HCT116 (cell line): ENCODE measurements at regions of chr19 and their contacts with region 1.

Region 1: GRCh38 chr19:50476224-50476942 is at the starts of genes EMC10 and GARIN5A:
- DNase-seq: peak; percentile 96
- ATAC-seq: peak; percentile 90
- H3K4me3 ChIP-seq: peak within 1 kb of the TSS; percentile 92 to 100
- H3K27ac ChIP-seq: peak within 1 kb of the TSS; percentile 93
- H3K4me1 ChIP-seq: peaks cover 9 to 21% of the 10 kb centered on the region in 2 experiments; a peak in 3 of 4 replicates
- H3K27me3 ChIP-seq: no peaks in the 10 kb centered on the region
- CTCF ChIP-seq: no peak
- POLR2A ChIP-seq: peak; percentile 92
- RAD21 ChIP-seq: no peak
- total RNA-seq, gene EMC10: 92.4 TPM
- total RNA-seq, gene GARIN5A: 12.2 TPM

Region 2: DNA sequence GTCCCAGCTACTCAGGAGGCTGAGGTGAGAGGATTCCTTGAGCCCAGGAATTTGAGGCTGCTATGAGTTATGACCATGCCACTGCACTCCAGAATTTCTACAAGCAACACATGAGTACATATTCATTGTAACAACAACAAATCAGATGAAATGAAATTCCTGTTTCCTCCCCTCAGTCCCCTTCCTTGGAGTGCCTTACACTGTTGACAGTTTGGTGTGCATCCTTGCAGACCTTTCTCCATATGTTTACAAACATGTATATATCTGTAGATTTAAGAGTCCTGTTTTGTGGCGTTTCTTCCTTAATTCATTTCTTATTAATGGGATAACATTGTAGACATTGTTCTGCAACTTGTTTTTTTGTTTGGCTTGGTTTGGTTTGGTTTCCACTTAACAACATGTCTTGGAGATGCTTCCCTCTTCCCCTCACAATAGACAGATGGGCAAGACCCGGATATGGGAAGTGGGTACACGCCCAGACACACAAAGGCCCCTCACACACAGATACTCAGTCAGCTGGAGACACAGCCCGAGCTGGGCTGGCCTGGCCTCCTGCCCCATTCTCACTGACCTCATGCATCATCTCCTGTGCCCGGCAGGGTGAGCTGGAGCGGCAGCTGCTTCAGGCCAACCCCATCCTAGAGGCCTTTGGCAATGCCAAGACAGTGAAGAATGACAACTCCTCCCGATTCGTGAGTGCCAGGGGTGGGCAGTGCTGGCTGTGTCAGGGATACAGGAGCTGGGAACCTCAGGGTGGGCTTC is 251.2 kb before region 1 on chr19:
- CTCF ChIA-PET with region 1: no interaction called
- POLR2A ChIA-PET with region 1: no interaction called
- RAD21 ChIA-PET with region 1: no interaction called
- intact Hi-C with region 1: no loop called
- DNase-seq: no peak
- ATAC-seq: no peak
- H3K4me3 ChIP-seq: no peak overlapping the region
- H3K27ac ChIP-seq: no peak overlapping the region
- H3K4me1 ChIP-seq: no peaks in the 10 kb centered on the region
- H3K27me3 ChIP-seq: no peaks in the 10 kb centered on the region
- CTCF ChIP-seq: no peak
- POLR2A ChIP-seq: no peak
- RAD21 ChIP-seq: no peak

Region 3: DNA sequence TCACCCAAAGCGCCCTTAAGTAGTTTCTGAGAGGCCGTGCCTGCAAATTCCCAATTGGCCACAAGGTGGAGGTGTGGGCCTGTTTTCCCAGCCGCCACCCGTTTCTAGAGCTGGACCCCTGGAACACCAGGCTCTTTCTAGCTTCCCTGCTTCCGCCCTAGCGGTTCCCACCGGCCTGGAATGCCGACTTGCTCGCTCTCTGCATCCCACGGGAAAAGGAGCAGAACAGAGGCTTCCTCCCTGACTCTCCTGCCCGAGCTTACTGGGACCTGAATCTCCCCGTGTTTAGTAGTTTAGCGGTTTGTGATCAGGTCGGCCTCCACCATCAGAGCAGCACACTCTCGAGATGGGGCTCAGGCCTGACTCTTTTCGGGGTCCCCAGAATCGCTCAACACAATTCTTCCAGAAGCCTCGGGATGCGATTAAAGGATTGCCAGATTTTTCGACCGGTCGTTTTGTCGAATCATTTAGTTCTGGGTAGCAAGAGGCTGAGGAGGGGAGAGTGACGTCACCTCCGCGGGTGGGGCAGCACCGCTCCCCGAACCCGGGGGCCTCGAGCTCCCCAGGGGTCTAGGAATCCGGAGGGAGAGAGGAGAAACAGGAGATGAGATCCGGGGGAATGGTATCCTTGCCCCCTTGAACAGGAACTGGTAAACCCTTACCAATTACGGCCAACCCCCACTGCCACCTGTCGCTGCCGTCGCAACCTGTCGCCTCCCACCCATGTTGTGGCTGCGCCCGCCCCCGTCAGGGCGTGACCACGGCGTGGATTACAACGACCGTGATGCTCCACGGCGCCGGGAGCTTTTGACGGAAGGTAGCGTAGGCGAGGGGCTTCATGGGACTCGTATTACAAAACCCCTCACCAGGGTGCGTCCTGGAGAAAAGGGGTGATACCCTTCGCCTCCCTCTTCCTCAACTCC is 118.9 kb before region 1 on chr19:
- CTCF ChIA-PET with region 1: interaction called, 10 read pairs
- POLR2A ChIA-PET with region 1: no interaction called
- RAD21 ChIA-PET with region 1: no interaction called
- intact Hi-C with region 1: no loop called
- DNase-seq: no peak
- ATAC-seq: peak; percentile 85
- H3K4me3 ChIP-seq: no peak overlapping the region
- H3K27ac ChIP-seq: no peak overlapping the region
- H3K4me1 ChIP-seq: peaks cover 0 to 3% of the 10 kb centered on the region in 2 experiments; a peak in 1 of 4 replicates
- H3K27me3 ChIP-seq: no peaks in the 10 kb centered on the region
- CTCF ChIP-seq: peak; percentile 67 to 84 (median 83)
- POLR2A ChIP-seq: no peak
- RAD21 ChIP-seq: peak; percentile 81

Region 4: DNA sequence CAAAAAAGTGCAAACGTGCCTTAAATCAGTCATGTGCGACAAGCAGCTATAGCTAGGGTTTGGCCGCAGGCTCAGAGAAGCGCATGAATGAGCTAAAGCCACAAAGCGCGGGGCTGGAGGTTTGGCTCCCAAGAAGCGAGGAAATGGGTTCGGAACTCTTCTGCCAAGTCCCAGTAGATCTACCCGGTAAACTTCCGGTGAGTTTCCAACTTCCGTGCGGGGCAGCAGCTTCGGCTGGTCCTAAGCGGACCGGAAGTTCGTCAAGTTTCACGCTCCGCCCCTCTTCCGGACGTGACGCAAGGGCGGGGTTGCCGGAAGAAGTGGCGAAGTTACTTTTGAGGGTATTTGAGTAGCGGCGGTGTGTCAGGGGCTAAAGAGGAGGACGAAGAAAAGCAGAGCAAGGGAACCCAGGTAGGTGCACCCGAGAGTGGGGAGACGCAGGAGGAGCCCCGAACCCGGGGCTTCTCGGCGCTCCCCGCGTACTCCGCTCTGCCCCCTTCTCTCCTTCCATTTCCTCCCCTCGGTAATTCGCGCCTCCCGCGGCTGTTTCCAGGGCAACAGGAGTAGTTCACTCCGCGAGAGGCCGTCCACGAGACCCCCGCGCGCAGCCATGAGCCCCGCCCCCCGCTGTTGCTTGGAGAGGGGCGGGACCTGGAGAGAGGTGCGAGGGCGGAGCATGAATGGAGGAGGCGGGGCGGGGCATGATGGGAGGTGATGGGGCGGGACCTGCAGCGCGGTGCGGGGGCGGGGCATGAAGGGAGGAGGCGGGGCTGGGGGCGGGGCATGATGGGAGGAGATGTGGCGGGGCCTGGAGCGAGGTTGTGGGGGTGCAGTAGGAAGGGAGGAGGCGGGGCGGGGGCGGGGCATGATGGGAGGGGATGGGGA is 100.0 kb before region 1 on chr19 and contains the start of gene NR1H2:
- CTCF ChIA-PET with region 1: no interaction called
- POLR2A ChIA-PET with region 1: no interaction called
- RAD21 ChIA-PET with region 1: no interaction called
- intact Hi-C with region 1: loop called (anchors 1 kb)
- DNase-seq: peak; percentile 98
- ATAC-seq: peak; percentile 85
- H3K4me3 ChIP-seq: peak within 1 kb of the TSS; percentile 76 to 95
- H3K27ac ChIP-seq: peak within 1 kb of the TSS; percentile 85
- H3K4me1 ChIP-seq: peaks cover 4 to 13% of the 10 kb centered on the region in 2 experiments; a peak in 3 of 4 replicates
- H3K27me3 ChIP-seq: no peaks in the 10 kb centered on the region
- CTCF ChIP-seq: no peak
- POLR2A ChIP-seq: peak; percentile 57
- RAD21 ChIP-seq: no peak
- total RNA-seq, gene NR1H2: 40.3 TPM

Region 5: DNA sequence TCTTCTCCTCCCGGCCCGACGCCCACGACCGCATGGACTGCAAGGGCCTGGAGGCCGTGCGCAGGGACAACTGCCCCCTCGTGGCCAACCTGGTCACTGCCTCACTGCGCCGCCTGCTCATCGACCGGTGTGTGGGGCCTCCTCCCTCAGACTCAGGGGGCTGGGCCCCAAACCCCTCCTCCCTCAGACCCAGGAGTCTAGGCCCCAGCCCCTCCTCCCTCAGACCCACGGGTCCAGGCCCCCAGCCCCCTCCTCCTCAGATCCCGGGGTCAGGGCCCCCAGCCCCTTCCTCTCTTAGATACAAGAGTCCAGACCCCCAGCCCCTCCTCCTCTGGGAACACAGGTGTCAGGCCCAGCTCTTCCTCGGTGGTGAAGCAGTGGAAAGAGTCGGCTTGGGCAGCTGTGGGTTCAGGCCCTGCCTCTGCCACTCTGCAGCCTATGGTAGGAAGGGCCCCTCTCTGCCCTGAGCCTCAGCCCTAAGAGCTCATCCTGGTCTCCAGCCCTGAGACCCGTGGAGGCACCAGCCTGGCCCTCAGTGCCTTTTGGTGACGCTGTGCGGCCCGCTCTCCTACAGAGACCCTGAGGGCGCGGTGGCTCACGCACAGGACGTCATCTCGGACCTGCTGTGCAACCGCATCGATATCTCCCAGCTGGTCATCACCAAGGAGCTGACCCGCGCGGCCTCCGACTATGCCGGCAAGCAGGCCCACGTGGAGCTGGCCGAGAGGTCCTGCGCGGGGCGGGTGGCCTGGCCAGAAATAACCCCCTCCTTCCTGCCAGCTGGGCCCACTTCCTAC is 61.3 kb before region 1 on chr19:
- CTCF ChIA-PET with region 1: no interaction called
- POLR2A ChIA-PET with region 1: no interaction called
- RAD21 ChIA-PET with region 1: no interaction called
- intact Hi-C with region 1: no loop called
- DNase-seq: peak; percentile 16
- ATAC-seq: peak; percentile 83
- H3K4me3 ChIP-seq: no peak overlapping the region
- H3K27ac ChIP-seq: peak overlapping the region; percentile 43; the same call in 1 of the 2 replicates
- H3K4me1 ChIP-seq: no peaks in the 10 kb centered on the region
- H3K27me3 ChIP-seq: no peaks in the 10 kb centered on the region
- CTCF ChIP-seq: peak; percentile 43 to 92 (median 90); a peak in 5 of 6 replicates
- POLR2A ChIP-seq: no peak
- RAD21 ChIP-seq: no peak; the same call in 1 of the 2 replicates

Region 6: DNA sequence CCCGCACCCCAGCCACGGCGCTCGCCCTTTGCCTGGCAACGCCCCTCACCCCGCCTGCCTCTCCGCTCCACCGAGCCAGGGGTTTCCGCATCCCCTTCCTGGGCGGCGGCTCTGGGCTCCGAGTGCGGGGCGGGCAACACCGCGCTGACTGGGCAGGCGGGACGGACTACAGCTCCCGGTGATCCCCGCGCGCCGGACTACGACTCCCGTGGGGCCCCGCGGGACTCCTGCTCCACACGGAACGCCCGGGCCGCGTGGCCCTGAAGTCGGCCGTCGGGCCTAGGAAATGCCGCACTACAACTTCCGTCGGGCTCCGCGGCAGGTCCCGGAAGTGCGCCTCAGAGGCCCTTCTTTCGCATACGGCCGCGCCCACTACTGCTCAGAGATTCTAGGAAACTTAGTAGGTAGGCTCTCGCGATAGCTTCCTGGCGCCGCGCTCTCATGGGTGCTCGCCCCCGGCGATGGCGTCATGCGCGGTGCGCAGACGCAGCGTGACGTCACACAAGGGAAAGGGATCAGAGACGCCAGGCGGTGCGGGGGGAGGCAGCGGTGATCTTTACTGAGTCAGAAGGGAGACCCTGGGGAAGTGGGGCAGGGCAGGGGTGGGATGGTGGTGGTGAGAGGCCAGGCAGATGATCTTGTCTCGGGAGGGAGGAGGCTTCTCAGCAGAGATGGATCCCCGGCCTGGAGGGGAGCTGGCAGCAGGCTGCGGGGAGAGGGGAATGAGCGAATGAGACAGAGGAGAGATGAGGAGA is 34.9 kb after region 1 on chr19 and contains the start of gene JOSD2:
- CTCF ChIA-PET with region 1: no interaction called
- POLR2A ChIA-PET with region 1: no interaction called
- RAD21 ChIA-PET with region 1: no interaction called
- intact Hi-C with region 1: loop called (anchors 1 kb)
- DNase-seq: peak; percentile 99
- ATAC-seq: peak; percentile 93
- H3K4me3 ChIP-seq: peak within 1 kb of the TSS; percentile 82 to 90
- H3K27ac ChIP-seq: peak within 1 kb of the TSS; percentile 77
- H3K4me1 ChIP-seq: peaks cover 3 to 15% of the 10 kb centered on the region in 2 experiments; a peak in 3 of 4 replicates
- H3K27me3 ChIP-seq: no peaks in the 10 kb centered on the region
- CTCF ChIP-seq: no peak
- POLR2A ChIP-seq: peak; percentile 31
- RAD21 ChIP-seq: no peak
- total RNA-seq, gene JOSD2: 40.9 TPM

Region 7: GRCh38 chr19:50838239-50838883 is 362.0 kb after region 1 on chr19:
- CTCF ChIA-PET with region 1: no interaction called
- POLR2A ChIA-PET with region 1: no interaction called
- RAD21 ChIA-PET with region 1: no interaction called
- intact Hi-C with region 1: no loop called
- DNase-seq: peak; percentile 18
- ATAC-seq: peak; percentile 33
- H3K4me3 ChIP-seq: no peak overlapping the region
- H3K27ac ChIP-seq: no peak overlapping the region
- H3K4me1 ChIP-seq: peaks cover 15 to 29% of the 10 kb centered on the region in 2 experiments
- H3K27me3 ChIP-seq: 0 out of 2 replicates have a peak, but pooled peaks cover 7% of the 10 kb centered on the region
- CTCF ChIP-seq: peak; percentile 37 to 60 (median 51); a peak in 5 of 6 replicates
- POLR2A ChIP-seq: no peak
- RAD21 ChIP-seq: peak; percentile 53